ENCODE measurements at regions of chrX and their contacts with region 1.

Region 1: GRCh38 chrX:54808605-54809483 is 1.3 kb downstream of the MAGED2 start:
- DNase-seq: peak; percentile 98
- H3K4me3 ChIP-seq: peak overlapping the region; percentile 43 to 83 (median 81)
- H3K27ac ChIP-seq: peak overlapping the region; percentile 23
- H3K4me1 ChIP-seq: peaks cover 5% of the 10 kb centered on the region
- H3K27me3 ChIP-seq: peaks cover 3 to 10% of the 10 kb centered on the region in 2 experiments
- CTCF ChIP-seq: no peak
- POLR2A ChIP-seq: peak; percentile 66

Region 2: DNA sequence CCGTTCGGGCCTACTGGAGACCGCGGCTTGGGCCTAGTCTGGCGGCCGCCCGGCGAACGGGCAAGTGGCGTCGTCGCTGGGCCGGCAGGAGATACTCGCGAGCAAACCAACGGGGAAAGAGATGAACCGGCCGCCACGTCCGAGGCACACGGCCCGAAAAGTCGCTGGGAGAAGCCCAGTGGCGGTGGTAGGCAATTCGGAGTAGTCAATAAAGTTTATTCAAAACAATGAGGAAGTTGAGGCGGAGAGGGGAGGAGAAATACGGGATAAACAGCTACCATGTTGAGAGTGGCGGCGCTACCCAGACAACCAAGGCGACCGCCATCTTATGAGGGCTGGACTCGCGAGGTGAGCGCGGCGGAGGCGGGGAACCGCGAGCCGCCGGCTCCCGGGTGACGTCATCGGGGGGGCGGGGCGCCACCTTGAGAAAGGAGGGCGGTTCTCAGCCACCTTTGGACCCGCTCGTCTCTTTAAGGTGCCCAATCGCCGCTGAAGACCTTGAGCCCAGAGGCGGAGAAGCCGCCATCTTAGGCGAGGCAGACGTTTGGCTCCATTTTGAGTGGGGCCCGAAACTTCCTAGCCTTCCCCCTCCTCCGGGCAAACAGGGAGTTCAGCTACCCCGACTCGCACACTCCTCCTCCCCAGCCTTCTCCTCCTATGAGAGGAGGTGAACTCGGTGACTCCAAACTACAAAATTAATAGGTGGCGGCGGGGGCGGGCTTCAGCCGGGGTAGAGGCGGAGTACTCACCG is 764.5 kb before region 1 on chrX and contains the start of gene PHF8:
- CTCF ChIA-PET with region 1: no interaction called
- POLR2A ChIA-PET with region 1: no interaction called
- dilution Hi-C with region 1: no loop called
- intact Hi-C with region 1: loop called (anchors 5 kb)
- DNase-seq: peak; percentile 95
- H3K4me3 ChIP-seq: peak within 1 kb of the TSS; percentile 66 to 87 (median 70)
- H3K27ac ChIP-seq: peak within 1 kb of the TSS; percentile 81
- H3K4me1 ChIP-seq: peaks cover 13% of the 10 kb centered on the region
- H3K27me3 ChIP-seq: no peaks in the 10 kb centered on the region
- CTCF ChIP-seq: no peak
- POLR2A ChIP-seq: peak; percentile 70
- total RNA-seq, gene PHF8: 23.2 and 25.5 TPM in 2 replicates

Region 3: DNA sequence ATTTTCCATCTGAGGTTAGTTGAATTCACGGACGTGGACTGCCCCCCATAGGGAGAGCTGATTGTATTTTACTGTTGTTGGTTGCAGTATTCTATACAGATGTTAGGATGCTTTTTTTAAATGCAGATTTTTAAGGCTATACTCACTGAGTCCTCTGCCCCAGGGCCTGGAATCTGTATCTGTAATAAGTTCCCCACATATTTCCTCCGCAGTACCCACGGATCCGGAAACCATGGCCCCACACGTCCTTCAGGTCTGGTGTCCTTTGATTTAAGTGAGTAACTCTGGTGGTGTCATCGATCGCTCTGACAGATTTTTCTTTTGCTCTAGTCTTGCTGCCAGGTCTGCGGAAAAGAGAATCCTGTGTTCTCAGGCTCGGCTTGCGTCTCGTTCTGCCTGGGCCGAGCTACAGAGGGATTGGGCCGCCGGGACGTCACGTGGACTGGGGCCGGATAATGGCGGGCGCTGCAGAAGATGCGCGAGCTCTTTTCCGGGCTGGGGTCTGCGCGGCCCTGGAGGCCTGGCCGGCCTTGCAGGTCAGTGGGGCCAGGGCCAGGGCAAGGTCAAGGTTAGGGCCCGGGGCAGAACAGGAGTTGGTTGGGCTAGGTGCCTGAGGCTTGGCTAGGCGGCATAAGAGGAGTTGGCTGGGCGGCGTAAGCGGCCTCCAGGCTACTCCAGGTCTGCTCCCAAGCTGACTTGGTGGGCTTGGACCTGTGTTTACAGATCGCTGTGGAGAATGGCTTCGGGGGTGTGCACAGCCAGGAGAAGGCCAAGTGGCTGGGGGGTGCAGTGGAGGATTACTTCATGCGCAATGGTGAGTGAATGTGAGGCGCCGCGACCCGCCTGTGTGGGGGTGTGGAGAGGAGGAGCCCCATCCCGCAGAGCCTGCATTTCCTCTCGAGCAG is 368.6 kb before region 1 on chrX and contains the start of gene TSR2:
- CTCF ChIA-PET with region 1: no interaction called
- POLR2A ChIA-PET with region 1: no interaction called
- dilution Hi-C with region 1: no loop called
- intact Hi-C with region 1: loop called (anchors 10 kb)
- DNase-seq: peak; percentile 87
- H3K4me3 ChIP-seq: peak within 1 kb of the TSS; percentile 89 to 97 (median 94)
- H3K27ac ChIP-seq: peak within 1 kb of the TSS; percentile 45
- H3K4me1 ChIP-seq: peaks cover 12% of the 10 kb centered on the region
- H3K27me3 ChIP-seq: no peaks in the 10 kb centered on the region
- CTCF ChIP-seq: peak in 1 of 2 donors; percentile 8
- POLR2A ChIP-seq: peak; percentile 28
- total RNA-seq, gene TSR2: 22.8 and 25.1 TPM in 2 replicates

Region 4: DNA sequence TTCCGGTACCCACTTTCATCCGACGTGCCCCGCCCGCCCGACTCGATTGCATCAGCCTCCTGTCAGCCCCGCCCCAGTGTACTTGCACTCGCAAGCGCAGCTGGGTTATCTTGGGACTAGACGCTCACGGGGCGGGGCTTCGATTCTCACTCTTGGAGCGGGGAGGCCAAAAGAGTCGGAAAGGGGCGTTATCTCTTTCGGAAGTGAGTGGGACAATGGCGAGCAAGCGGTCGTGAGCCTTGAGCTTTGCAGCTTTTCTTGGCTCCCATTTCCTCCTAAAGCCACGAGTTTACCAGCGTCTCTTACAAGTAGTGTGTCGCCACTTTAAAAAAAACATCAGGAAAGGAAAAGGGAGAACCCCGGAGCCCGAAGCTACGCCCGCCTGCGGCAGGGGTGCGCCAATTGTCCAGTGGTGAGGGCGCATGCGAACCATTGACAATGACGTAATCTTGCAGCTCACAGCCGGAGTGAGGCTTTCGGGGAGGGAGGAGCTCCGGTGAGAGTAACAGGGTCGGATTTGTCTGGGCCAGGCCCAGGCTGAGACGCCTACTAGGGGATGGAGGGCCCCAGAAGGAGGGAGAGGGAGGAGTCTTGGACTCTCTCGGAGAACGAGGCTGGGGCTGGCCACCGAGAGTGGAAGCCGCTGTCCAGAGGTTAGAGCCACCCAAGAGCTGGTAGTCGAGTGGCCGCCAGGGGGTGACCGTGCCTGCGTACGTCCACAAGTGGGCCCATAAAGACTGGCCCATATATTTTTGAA is 169.3 kb before region 1 on chrX:
- CTCF ChIA-PET with region 1: interaction called, 4 read pairs
- POLR2A ChIA-PET with region 1: interaction called, 3 read pairs
- dilution Hi-C with region 1: no loop called
- intact Hi-C with region 1: loop called (anchors 1 kb)
- DNase-seq: peak; percentile 97
- H3K4me3 ChIP-seq: peak overlapping the region; percentile 35 to 73 (median 40)
- H3K27ac ChIP-seq: peak overlapping the region; percentile 98
- H3K4me1 ChIP-seq: peaks cover 6% of the 10 kb centered on the region
- H3K27me3 ChIP-seq: no peaks in the 10 kb centered on the region
- CTCF ChIP-seq: peak; percentile 61 to 79
- POLR2A ChIP-seq: peak; percentile 46

Region 5: GRCh38 chrX:54999717-55000598 is 191.1 kb after region 1 on chrX and contains the start of gene APEX2:
- CTCF ChIA-PET with region 1: no interaction called
- POLR2A ChIA-PET with region 1: no interaction called
- dilution Hi-C with region 1: no loop called
- intact Hi-C with region 1: loop called (anchors 5 kb)
- DNase-seq: peak; percentile 92
- H3K4me3 ChIP-seq: peak within 1 kb of the TSS; percentile 57 to 93 (median 74)
- H3K27ac ChIP-seq: peak within 1 kb of the TSS; percentile 90
- H3K4me1 ChIP-seq: peaks cover 26% of the 10 kb centered on the region
- H3K27me3 ChIP-seq: no peaks in the 10 kb centered on the region
- CTCF ChIP-seq: no peak
- POLR2A ChIP-seq: peak; percentile 72
- total RNA-seq, gene APEX2: 22.7 and 26.6 TPM in 2 replicates

Region 6: GRCh38 chrX:55160685-55161552 is 352.1 kb after region 1 on chrX:
- CTCF ChIA-PET with region 1: no interaction called
- POLR2A ChIA-PET with region 1: no interaction called
- dilution Hi-C with region 1: no loop called
- intact Hi-C with region 1: loop called (anchors 5 kb)
- DNase-seq: peak; percentile 91
- H3K4me3 ChIP-seq: peak overlapping the region; percentile 62 to 83 (median 65)
- H3K27ac ChIP-seq: peak overlapping the region; percentile 74
- H3K4me1 ChIP-seq: peaks cover 5% of the 10 kb centered on the region
- H3K27me3 ChIP-seq: no peaks in the 10 kb centered on the region
- CTCF ChIP-seq: peak; percentile 24 to 52
- POLR2A ChIP-seq: peak; percentile 77

Region 7: GRCh38 chrX:56563231-56564161 is 1754.7 kb after region 1 on chrX and contains the start of gene UBQLN2:
- CTCF ChIA-PET with region 1: no interaction called
- POLR2A ChIA-PET with region 1: no interaction called
- dilution Hi-C with region 1: no loop called
- intact Hi-C with region 1: loop called (anchors 5 kb)
- DNase-seq: peak; percentile 84
- H3K4me3 ChIP-seq: peak within 1 kb of the TSS; percentile 35 to 79 (median 78)
- H3K27ac ChIP-seq: peak within 1 kb of the TSS; percentile 67
- H3K4me1 ChIP-seq: peaks cover 18% of the 10 kb centered on the region
- H3K27me3 ChIP-seq: no peaks in the 10 kb centered on the region
- CTCF ChIP-seq: no peak
- POLR2A ChIP-seq: no peak
- total RNA-seq, gene UBQLN2: 22.8 and 25.3 TPM in 2 replicates

Measured in endothelial cell of umbilical vein (primary cell).